Right ventricle myocardium superior (tissue), 1 donor: ENCODE measurements at regions of chr7 and their contacts with region 1.

Region 1: DNA sequence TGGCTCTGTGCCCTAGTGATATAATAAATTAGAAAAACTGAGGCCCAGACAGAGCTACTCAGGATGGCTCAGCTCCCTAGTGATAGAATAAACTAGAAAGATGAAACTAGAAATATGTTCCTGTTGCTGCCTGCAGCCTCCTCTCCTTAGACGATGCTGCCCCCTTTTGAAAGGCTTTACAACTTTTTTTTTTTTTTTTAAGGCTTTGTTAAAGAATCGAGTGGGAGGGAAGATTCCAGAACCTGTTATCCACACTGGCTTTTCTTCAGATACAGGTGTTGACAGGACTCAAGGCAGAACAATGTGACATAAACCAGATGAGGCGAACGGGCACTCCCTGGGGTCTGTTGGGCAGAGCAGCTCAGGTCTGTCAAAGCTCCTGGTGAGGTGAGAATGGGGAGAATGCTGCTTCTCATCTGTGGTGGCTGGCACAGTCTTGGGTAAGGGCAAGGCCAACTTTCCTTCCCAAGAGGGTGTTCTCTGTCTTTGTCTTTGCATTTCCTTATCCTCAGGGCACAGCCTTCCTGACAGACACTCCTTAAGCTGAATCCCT is 175.1 kb downstream of the COBL start:
- DNase-seq: no peak
- ATAC-seq: peak; percentile 80

Region 2: GRCh38 chr7:50610521-50611277 is 530.8 kb before region 1 on chr7:
- intact Hi-C with region 1: loop called (anchors 10 kb)
- DNase-seq: no peak
- ATAC-seq: no peak

Region 3: GRCh38 chr7:50782384-50783208 is 358.9 kb before region 1 on chr7 and contains the start of gene GRB10:
- intact Hi-C with region 1: loop called (anchors 10 kb)
- DNase-seq: peak; percentile 56
- ATAC-seq: peak; percentile 89
- total RNA-seq, gene GRB10: 32.2 TPM